ENCODE measurements at regions of chr5 and their contacts with region 1.

Region 1: GRCh38 chr5:114789773-114790402 is 379.8 kb downstream of the TRIM36 start:
- ATAC-seq: peak in 7 of 8 experiments; percentile 37 to 73 (median 55)
- H3K4me3 ChIP-seq: no peak overlapping the region
- H3K27ac ChIP-seq: no peak overlapping the region
- H3K4me1 ChIP-seq: no peaks in the 10 kb centered on the region

Region 2: DNA sequence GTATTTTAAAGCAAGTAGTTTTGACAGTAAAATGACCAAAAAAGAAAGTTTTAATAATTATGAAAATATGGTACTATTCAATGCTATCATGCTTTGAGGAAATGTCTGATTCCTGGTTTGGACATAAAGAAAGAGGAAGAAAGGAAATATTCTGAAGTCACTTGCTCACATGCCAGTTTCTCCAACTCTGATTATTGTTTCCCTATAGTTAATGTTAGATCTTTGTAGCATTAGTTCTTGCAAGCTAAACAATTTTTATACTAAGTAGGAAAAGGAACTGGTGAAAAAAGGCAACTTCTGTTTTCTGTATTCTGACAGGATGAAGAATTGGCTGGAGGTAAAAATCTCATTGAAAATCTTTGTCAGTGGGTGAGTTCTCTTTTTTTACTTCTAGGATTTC is 1156.9 kb before region 1 on chr5:
- in situ Hi-C with region 1: loop called in 1 of 9 experiments (anchors 25 kb)
- ATAC-seq: no peak
- H3K4me3 ChIP-seq: no peak overlapping the region
- H3K27ac ChIP-seq: no peak overlapping the region
- H3K4me1 ChIP-seq: no peaks in the 10 kb centered on the region

Region 3: GRCh38 chr5:113663880-113664541 is 1125.9 kb before region 1 on chr5:
- in situ Hi-C with region 1: loop called in 1 of 9 experiments (anchors 25 kb)
- ATAC-seq: peak in 3 of 8 experiments; percentile 88 to 93 (median 89)
- H3K4me3 ChIP-seq: no peak overlapping the region
- H3K27ac ChIP-seq: no peak overlapping the region
- H3K4me1 ChIP-seq: peaks cover 4% of the 10 kb centered on the region in 2 donors

Region 4: GRCh38 chr5:115607935-115608334 is 818.0 kb after region 1 on chr5:
- in situ Hi-C with region 1: no loop called
- ATAC-seq: no peak
- H3K4me3 ChIP-seq: no peak overlapping the region
- H3K27ac ChIP-seq: no peak overlapping the region
- H3K4me1 ChIP-seq: peaks cover under 1 to 2% of the 10 kb centered on the region in 2 donors

Measured in motor neuron (in vitro differentiated cells).